Dorsolateral prefrontal cortex (tissue), 120 donors: ENCODE measurements at regions of chr4 and their contacts with region 1.

Region 1: GRCh38 chr4:36414248-36414647 is 132.8 kb downstream of the DTHD1 start:
- DNase-seq: no peak
- H3K4me3 ChIP-seq: no peak overlapping the region
- H3K27ac ChIP-seq: no peak overlapping the region
- H3K27me3 ChIP-seq: no peaks in the 10 kb centered on the region
- CTCF ChIP-seq: peak in 55 of 56 donors; percentile 26 to 72 (median 52)

Region 2: DNA sequence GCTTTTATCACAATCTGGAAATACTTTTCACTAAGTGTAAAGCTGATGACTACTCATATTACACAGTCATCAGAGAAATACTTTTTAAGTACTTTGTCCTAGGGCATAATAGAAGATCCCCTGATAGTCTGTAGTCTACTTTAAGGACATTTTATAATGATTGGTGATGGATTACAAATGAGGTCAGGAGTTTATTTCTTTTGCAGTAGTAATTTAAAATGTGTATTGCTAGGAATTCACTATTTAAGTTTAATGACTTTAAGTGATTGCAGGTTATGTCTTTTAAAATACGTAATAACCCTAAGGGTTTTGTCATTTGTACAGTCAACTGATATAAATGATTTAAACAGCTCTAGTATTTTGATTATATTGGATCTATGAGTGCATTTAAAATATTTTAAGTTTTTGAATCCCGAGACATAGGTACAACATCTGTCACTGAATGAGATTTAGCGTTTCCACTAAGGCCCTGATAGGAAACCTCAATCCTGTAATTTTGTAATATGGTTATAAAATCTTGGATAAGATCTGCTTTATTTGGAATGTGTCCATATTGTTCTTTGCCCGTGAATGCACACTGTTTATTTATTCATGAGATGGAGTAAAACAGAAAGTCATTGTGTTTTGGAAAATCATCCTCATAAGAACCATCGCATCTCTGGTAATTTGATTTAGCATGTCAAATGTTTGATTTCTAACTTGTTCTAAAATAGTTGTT is 359.3 kb before region 1 on chr4:
- intact Hi-C with region 1: no loop called
- DNase-seq: no peak
- H3K4me3 ChIP-seq: peak overlapping the region in 36 of 59 donors; percentile 4 to 57 (median 29)
- H3K27ac ChIP-seq: peak overlapping the region in 52 of 59 donors; percentile 0 to 83 (median 61)
- H3K27me3 ChIP-seq: no peaks in the 10 kb centered on the region
- CTCF ChIP-seq: no peak

Region 3: DNA sequence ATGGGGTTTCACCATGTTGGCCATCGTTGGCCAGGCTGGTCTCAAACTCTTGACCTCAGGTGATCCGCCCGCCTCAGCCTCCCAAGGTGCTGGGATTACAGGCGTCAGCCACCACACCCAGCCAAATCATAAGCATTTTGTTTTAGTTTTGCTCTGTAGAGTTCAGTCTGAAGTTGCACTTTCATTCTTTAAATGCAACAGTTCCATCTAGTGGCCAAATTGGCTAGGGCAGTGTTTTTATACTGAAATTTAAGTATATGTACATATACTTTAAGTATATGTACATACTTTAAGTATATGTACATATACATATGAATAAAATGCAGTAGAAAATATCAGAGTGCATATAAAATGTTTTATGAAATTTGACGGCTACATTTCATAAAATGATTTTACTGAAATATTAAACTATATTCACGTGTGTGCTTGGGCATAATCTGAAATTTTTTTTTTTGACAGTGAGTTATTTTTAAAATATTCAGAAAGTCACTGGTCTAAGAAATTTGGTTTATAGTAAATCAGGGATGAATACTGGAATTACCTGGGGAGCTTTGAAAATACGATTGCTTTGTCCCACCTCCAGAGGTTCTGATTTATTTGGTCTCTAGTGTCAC is 975.8 kb after region 1 on chr4:
- intact Hi-C with region 1: loop called (anchors 5 to 10 kb)
- DNase-seq: no peak
- H3K4me3 ChIP-seq: peak overlapping the region in 22 of 59 donors; percentile 3 to 47 (median 23)
- H3K27ac ChIP-seq: no peak overlapping the region
- H3K27me3 ChIP-seq: no peaks in the 10 kb centered on the region
- CTCF ChIP-seq: peak; percentile 70 to 98 (median 83)